Vagina (tissue), 2 donors: ENCODE measurements at regions of chr18 and their contacts with region 1.

Region 1: DNA sequence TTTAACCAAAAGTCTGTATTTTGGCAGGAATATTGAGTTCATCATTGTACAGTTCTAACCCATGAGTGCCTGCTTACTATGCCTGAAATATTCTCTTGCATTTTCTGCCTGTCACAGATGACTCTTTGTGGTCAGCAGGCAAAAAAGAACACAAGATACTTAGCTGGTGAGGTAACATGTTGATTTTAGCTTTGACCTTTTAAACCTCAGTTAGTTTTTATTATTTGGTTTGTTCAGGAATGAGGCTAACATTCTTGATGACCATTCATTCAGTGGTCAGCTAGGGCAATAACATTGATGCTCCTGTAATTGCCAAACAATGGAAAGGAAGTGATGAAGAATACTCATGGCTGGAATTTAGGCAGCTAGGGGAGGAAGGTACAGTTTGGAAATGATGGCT is 491.2 kb downstream of the PIK3C3 start:
- DNase-seq: no peak
- H3K4me3 ChIP-seq: no peak overlapping the region
- H3K27ac ChIP-seq: no peak overlapping the region
- H3K4me1 ChIP-seq: no peaks in the 10 kb centered on the region
- H3K27me3 ChIP-seq: no peaks in the 10 kb centered on the region
- CTCF ChIP-seq: no peak
- POLR2A ChIP-seq: no peak

Region 2: GRCh38 chr18:42365591-42365990 is 80.6 kb before region 1 on chr18:
- intact Hi-C with region 1: no loop called
- DNase-seq: no peak
- H3K4me3 ChIP-seq: no peak overlapping the region
- H3K27ac ChIP-seq: no peak overlapping the region
- H3K4me1 ChIP-seq: no peaks in the 10 kb centered on the region
- H3K27me3 ChIP-seq: no peaks in the 10 kb centered on the region
- CTCF ChIP-seq: no peak
- POLR2A ChIP-seq: no peak

Region 3: DNA sequence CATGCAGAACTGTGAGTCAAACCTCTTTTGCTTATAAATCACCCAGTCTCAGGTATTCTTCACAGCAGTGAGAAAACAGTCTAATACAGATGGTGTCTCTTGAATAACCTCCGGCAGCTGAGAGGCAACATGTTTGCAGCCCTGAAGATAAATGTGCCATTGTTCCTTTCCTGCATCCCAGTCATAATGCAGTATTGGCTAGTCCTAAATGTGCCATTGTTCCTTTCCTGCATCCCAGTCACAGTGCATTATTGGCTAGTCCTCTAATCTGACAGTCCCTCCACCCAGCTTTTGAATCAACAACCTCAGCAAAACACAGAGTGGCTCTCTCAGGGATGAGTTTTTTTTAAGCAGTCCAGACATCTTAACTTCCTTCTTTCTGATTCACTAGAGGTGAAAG is 118.6 kb after region 1 on chr18:
- intact Hi-C with region 1: loop called (anchors 5 kb)
- DNase-seq: no peak
- H3K4me3 ChIP-seq: no peak overlapping the region
- H3K27ac ChIP-seq: no peak overlapping the region
- H3K4me1 ChIP-seq: no peaks in the 10 kb centered on the region
- H3K27me3 ChIP-seq: no peaks in the 10 kb centered on the region
- CTCF ChIP-seq: no peak
- POLR2A ChIP-seq: no peak